Prostate gland (tissue), 2 donors: ENCODE measurements at regions of chr16 and their contacts with region 1.

Region 1: GRCh38 chr16:72124761-72125634 is 31.4 kb downstream of the DHX38 start:
- DNase-seq: peak; percentile 54
- H3K4me3 ChIP-seq: no peak overlapping the region
- H3K27ac ChIP-seq: no peak overlapping the region
- H3K4me1 ChIP-seq: no peaks in the 10 kb centered on the region
- H3K27me3 ChIP-seq: no peaks in the 10 kb centered on the region
- CTCF ChIP-seq: peak in 3 of 4 experiments; percentile 61 to 70 (median 66)
- POLR2A ChIP-seq: no peak

Region 2: GRCh38 chr16:72467157-72467759 is 342.3 kb after region 1 on chr16:
- intact Hi-C with region 1: loop called (anchors 10 kb)
- DNase-seq: no peak
- H3K4me3 ChIP-seq: no peak overlapping the region
- H3K27ac ChIP-seq: no peak overlapping the region
- H3K4me1 ChIP-seq: no peaks in the 10 kb centered on the region
- H3K27me3 ChIP-seq: no peaks in the 10 kb centered on the region
- CTCF ChIP-seq: peak in 2 of 4 experiments; percentile 27 to 44
- POLR2A ChIP-seq: no peak